Mammary epithelial cell (primary cell): ENCODE measurements at regions of chr4 and their contacts with region 1.

Region 1: GRCh38 chr4:3346146-3346545 is 53.3 kb downstream of the RGS12 start:
- DNase-seq: peak; percentile 66
- H3K4me3 ChIP-seq: no peak overlapping the region
- H3K27ac ChIP-seq: no peak overlapping the region
- H3K4me1 ChIP-seq: no peaks in the 10 kb centered on the region
- H3K27me3 ChIP-seq: no peaks in the 10 kb centered on the region
- CTCF ChIP-seq: peak; percentile 79 to 92

Region 2: GRCh38 chr4:3388471-3389232 is 42.5 kb after region 1 on chr4:
- CTCF ChIA-PET with region 1: no interaction called
- dilution Hi-C with region 1: no loop called
- in situ Hi-C with region 1: loop called in 1 of 2 experiments (anchors 5 kb)
- intact Hi-C with region 1: loop called (anchors 1 kb)
- DNase-seq: peak; percentile 84
- H3K4me3 ChIP-seq: peak overlapping the region; percentile 73 to 85 (median 81)
- H3K27ac ChIP-seq: peak overlapping the region; percentile 83
- H3K4me1 ChIP-seq: peaks cover 33% of the 10 kb centered on the region
- H3K27me3 ChIP-seq: no peaks in the 10 kb centered on the region
- CTCF ChIP-seq: no peak

Region 3: DNA sequence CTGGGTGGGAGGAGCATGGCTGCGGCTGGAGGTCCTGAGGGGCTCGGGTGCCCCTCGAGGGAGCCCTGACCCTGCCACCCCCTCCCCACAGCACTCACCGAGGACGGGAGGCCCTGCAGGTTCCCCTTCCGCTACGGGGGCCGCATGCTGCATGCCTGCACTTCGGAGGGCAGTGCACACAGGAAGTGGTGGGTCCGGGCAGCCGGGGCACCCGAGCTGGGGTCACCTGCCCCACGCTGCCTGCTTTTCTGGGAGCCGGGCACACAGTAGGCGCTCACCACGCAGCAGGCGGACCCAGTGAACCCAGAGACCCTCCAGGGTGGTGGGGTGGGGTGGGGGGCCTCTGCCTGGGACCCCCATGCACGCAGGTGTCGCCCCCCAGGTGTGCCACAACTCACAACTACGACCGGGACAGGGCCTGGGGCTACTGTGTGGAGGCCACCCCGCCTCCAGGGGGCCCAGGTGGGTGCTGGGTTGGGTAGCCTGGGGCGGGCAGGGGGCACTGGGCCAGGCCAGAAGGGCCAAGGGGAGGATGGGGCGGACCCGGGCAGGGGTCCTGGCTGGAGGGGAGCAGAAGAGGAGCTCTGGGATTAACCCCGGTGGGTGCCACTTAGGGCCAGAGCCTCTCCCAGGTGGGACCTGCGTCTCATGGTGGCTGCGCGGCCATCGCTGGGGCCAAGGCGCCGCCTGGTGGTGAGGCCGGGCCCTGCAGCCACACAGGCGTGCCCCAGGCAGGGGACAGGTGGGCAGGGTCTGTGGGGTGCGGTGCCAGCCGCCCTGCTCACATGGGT is 97.0 kb after region 1 on chr4:
- CTCF ChIA-PET with region 1: no interaction called
- dilution Hi-C with region 1: no loop called
- in situ Hi-C with region 1: loop called (anchors 5 to 10 kb)
- intact Hi-C with region 1: loop called (anchors 1 kb)
- DNase-seq: peak; percentile 32
- H3K4me3 ChIP-seq: no peak overlapping the region
- H3K27ac ChIP-seq: no peak overlapping the region
- H3K4me1 ChIP-seq: no peaks in the 10 kb centered on the region
- H3K27me3 ChIP-seq: no peaks in the 10 kb centered on the region
- CTCF ChIP-seq: peak; percentile 94 to 95

Region 4: DNA sequence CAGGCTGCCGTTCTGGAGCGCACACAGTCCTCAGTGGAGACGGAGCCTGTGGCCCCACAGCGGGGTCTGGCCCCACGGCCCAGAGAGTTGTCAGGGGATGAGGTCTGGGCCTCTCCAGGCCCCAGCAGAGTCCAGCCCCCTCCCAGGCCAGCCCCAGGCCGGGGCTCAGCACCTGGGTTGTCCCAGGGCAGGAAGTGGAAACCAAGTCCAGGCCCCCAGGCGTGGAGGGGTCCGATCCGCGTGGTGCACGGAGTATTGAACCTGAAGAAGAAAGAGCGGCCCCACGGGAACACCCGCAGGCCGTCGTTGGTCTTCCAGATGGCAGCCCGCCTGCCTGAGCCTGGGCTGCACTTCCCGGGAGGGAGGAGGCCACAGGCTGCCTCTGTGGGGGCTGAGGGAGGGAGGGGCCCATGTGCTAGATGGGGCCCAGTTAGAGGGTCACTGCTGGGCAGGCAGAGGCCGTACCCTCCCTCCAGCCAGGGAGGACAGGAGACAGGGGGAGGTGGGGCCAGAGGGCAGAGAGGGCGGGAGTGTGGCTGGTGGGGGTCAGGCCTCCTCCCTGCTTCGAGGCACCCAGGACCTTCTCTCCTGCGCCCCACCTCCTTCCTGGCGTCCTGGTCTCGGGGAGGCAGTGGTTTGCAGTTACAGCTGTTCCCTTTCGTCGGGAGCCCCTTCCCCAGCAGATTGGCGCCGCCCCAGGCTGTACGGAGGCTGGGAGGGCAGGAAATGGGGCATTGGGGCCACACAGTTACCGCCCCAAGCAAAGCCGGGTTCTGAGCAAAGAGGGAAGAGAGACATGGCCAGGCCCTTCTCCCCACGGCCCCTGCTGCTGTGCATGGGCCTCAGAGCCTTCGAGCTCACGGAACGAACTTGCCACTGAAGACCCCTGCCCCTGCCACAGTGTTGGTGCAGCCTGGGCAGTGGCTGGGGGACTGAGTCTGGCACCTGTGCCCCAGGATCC is 103.7 kb after region 1 on chr4:
- CTCF ChIA-PET with region 1: no interaction called
- dilution Hi-C with region 1: no loop called
- in situ Hi-C with region 1: loop called in 1 of 2 experiments (anchors 5 kb)
- intact Hi-C with region 1: no loop called
- DNase-seq: no peak
- H3K4me3 ChIP-seq: no peak overlapping the region
- H3K27ac ChIP-seq: no peak overlapping the region
- H3K4me1 ChIP-seq: peaks cover 13% of the 10 kb centered on the region
- H3K27me3 ChIP-seq: no peaks in the 10 kb centered on the region
- CTCF ChIP-seq: no peak

Region 5: DNA sequence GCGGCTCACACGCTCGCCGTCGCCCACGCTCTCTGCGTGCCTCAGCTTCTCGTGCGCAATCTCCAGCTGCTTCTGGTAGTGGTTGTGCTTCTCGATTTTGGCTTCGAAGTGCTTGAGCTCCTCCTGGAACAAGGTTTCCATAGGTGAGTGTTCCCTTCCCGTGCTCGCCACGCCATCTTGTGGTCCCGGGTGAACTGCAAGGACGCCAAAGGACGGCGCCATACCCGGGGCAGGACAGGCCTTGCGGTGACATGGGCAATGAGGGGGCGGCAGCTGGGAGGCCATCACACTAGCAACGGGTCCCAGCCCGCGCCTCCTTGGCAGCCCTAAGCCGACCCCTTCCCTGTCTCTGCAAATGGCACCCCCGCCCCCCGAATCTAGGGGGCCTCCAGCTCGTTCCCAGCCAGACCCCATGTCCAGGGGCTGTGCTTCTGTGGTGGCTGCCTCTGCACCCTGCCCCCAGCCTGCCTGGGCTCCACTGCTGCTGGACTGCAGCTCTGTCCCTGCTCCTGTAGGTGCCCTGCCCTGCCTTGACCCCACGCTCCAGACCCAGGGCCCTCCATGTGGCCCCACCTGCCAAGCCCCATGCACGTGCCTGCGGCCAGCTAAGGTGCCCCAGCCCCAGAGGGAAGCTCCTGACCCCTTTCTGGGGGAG is 168.8 kb after region 1 on chr4:
- CTCF ChIA-PET with region 1: interaction called, 3 read pairs
- dilution Hi-C with region 1: no loop called
- in situ Hi-C with region 1: no loop called
- intact Hi-C with region 1: loop called (anchors 1 kb)
- DNase-seq: peak; percentile 17
- H3K4me3 ChIP-seq: no peak overlapping the region
- H3K27ac ChIP-seq: no peak overlapping the region
- H3K4me1 ChIP-seq: no peaks in the 10 kb centered on the region
- H3K27me3 ChIP-seq: no peaks in the 10 kb centered on the region
- CTCF ChIP-seq: peak; percentile 41 to 60